ENCODE measurements at regions of chr2 and their contacts with region 1.

Region 1: DNA sequence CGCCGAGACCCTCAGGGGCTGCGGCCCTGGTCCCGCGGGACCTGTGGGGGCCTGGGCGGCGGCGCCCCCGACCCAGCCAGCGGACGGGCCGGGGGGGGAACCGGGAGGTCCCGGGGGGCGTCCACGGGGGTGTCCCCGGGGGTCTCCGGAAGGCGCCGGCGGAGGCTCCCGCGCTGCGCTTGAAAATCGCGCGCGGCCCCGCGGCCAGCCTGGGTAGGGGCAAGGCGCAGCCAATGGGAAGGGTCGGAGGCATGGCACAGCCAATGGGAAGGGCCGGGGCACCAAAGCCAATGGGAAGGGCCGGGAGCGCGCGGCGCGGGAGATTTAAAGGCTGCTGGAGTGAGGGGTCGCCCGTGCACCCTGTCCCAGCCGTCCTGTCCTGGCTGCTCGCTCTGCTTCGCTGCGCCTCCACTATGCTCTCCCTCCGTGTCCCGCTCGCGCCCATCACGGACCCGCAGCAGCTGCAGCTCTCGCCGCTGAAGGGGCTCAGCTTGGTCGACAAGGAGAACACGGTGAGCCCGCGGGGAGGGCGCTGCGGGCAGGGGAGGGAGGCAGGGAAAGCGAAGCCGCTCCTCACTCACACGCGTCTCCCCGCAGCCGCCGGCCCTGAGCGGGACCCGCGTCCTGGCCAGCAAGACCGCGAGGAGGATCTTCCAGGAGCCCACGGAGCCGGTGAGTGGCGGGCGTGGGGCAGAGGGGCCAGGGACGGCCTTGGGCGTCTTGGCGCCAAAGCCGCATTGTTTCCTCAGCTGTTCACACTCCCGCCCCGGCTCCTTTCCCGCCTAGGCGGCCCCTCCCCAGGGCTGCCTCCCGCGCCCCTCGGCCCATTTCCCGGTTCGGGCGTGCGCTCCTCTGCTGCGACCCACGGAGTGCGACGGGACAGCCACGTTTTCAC is at the start of gene RRM2:
- DNase-seq: peak; percentile 87
- ATAC-seq: peak; percentile 87
- H3K4me3 ChIP-seq: peak within 1 kb of the TSS; percentile 82
- H3K27ac ChIP-seq: peak within 1 kb of the TSS; percentile 81; the same call in 1 of the 2 replicates
- H3K4me1 ChIP-seq: peaks cover 11% of the 10 kb centered on the region
- H3K27me3 ChIP-seq: no peaks in the 10 kb centered on the region
- CTCF ChIP-seq: no peak
- POLR2A ChIP-seq: peak; percentile 91
- RAD21 ChIP-seq: no peak
- total RNA-seq, gene RRM2: 53.6 and 75.5 TPM in 2 replicates

Region 2: DNA sequence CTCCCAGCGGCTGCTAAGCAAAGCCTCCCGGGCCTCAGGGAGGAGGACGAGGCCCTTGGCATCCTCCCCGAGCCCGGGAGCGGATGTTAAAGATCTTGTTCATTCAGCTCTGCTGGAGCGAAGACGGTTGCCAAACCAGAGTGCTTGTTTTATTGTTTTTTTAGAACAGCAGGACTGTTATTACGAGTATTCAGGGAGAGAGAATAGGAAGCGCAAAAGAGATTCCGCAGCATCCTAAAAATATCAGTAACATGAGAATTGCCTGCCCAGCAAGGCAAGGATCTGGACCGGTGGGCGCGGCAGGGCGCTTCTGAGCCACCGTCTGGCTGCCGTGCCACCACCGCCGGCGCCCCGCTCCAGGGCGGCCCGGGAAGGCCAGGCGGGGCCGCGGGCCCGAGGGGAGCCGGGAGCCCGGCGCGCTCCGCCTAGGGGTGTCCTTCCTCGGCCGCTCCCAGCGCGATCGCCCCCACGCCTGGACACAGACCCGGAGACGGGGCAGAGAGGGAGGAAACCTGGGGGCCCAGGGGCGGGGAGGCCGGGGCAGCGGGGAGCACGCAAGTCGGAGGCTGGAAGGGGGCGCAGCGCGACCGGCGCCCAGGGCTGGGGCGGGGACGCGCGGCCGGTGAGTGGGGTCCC is 43.3 kb before region 1 on chr2:
- CTCF ChIA-PET with region 1: no interaction called
- POLR2A ChIA-PET with region 1: interaction called, 11 read pairs
- dilution Hi-C with region 1: no loop called
- in situ Hi-C with region 1: no loop called
- intact Hi-C with region 1: no loop called
- DNase-seq: peak; percentile 58
- ATAC-seq: peak; percentile 74
- H3K4me3 ChIP-seq: peak overlapping the region; percentile 52
- H3K27ac ChIP-seq: no peak overlapping the region
- H3K4me1 ChIP-seq: 0 out of 2 replicates have a peak, but pooled peaks cover 2% of the 10 kb centered on the region
- H3K27me3 ChIP-seq: peaks cover 64% of the 10 kb centered on the region
- CTCF ChIP-seq: no peak
- POLR2A ChIP-seq: no peak
- RAD21 ChIP-seq: no peak

Region 3: DNA sequence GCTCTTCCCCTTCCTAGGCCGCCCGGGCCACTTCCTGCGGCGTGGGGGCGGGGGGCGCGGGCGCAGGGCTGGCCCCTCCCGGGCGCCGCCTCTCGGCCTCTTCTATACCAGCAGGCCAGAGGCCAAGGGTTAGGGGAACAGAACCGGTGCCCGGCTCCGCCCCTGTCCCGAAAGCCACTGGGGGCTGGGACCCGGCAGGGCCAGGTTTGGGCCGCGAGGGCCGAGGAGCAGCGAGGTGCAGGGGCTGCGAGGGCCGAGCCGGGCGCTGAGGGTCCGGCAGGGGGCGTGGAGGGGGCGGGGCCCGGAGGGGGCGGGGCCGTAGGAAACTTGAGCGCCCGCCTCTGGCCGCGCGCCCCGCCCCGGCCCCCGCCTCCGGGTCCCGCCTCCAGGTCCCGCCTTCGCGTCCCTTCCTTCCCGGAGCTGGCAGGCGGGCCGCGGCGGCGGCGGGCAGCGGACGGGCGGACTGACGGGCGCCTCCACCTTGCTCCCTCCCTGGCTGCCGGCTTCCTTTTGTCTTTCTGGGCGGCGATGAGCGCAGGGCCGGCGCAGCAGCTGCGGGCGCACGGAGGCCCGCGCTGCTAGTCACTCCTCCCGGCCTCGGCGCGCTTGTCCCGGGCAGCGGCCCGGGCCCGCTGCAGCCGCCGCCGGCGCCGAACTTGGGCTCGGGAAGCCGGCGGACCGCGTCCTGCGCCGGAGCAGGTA is 180.0 kb after region 1 on chr2 and contains the start of gene HPCAL1:
- CTCF ChIA-PET with region 1: interaction called, 5 read pairs
- POLR2A ChIA-PET with region 1: no interaction called
- dilution Hi-C with region 1: no loop called
- in situ Hi-C with region 1: no loop called
- intact Hi-C with region 1: loop called (anchors 1 kb)
- DNase-seq: peak; percentile 70
- ATAC-seq: peak; percentile 88
- H3K4me3 ChIP-seq: peak within 1 kb of the TSS; percentile 72
- H3K27ac ChIP-seq: peak within 1 kb of the TSS; percentile 78
- H3K4me1 ChIP-seq: peaks cover 12% of the 10 kb centered on the region; the same call in 1 of the 2 replicates
- H3K27me3 ChIP-seq: no peaks in the 10 kb centered on the region
- CTCF ChIP-seq: peak; percentile 51
- POLR2A ChIP-seq: peak; percentile 56; the same call in 1 of the 2 replicates
- RAD21 ChIP-seq: no peak; the same call in 1 of the 2 replicates
- total RNA-seq, gene HPCAL1: 8.2 and 9.4 TPM in 2 replicates

Region 4: GRCh38 chr2:10408649-10409579 is 286.3 kb after region 1 on chr2:
- CTCF ChIA-PET with region 1: interaction called, 13 read pairs
- POLR2A ChIA-PET with region 1: no interaction called
- dilution Hi-C with region 1: no loop called
- in situ Hi-C with region 1: no loop called
- intact Hi-C with region 1: loop called (anchors 1 kb)
- DNase-seq: peak; percentile 64
- ATAC-seq: peak; percentile 73
- H3K4me3 ChIP-seq: no peak overlapping the region
- H3K27ac ChIP-seq: no peak overlapping the region
- H3K4me1 ChIP-seq: peaks cover 23% of the 10 kb centered on the region
- H3K27me3 ChIP-seq: no peaks in the 10 kb centered on the region
- CTCF ChIP-seq: peak; percentile 94
- POLR2A ChIP-seq: no peak
- RAD21 ChIP-seq: peak; percentile 95

Region 5: DNA sequence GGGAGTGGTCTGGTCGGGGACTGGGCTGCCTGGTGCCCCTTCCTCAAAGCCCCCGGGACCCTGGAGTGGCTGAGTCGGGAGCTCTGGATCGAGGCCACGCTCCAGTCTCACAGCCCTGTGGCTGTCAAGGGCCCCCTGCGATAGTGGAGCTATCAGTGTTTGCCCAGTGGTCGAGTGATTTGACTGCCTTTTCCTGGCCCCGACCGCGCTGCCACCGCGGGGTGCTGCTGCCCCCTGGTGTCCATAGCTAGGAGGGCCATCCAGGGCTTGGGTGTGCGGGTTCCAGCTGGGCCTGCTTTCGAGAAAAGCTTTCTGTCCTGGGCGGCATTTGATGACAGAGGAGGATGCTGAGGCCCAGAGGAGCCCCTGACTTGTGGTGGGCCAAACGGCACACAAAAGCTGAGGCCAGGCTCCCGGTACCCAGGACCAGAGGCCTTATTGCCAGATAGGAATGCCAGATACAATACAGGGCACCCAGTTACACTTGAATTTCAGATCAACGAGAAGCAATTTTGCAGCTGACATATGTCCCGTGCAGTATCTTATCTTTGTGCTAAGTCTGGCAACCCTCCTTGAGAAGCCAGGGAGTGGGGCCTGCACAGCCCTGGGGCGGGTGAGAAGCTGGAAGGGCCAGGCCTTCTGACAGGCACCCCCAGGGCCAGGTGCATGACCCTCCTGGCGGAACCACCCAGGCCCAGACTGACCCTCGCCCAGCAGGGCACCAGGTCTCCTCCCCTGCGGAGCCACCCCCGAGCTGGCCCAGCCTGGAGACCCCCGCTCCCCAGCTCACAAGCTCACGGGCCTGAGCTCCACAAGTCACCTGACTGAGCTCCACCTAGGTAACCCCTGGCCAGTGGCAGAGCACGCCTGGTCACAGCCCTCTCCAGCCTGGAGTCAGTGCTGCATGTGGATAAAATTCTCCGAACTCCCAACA is 312.5 kb after region 1 on chr2:
- CTCF ChIA-PET with region 1: interaction called, 25 read pairs
- POLR2A ChIA-PET with region 1: no interaction called
- dilution Hi-C with region 1: no loop called
- in situ Hi-C with region 1: no loop called
- intact Hi-C with region 1: loop called (anchors 1 kb)
- DNase-seq: peak; percentile 52
- ATAC-seq: peak; percentile 93
- H3K4me3 ChIP-seq: no peak overlapping the region
- H3K27ac ChIP-seq: no peak overlapping the region
- H3K4me1 ChIP-seq: no peaks in the 10 kb centered on the region
- H3K27me3 ChIP-seq: no peaks in the 10 kb centered on the region
- CTCF ChIP-seq: peak; percentile 98
- POLR2A ChIP-seq: peak; percentile 58; the same call in 1 of the 2 replicates
- RAD21 ChIP-seq: peak; percentile 100

Region 6: GRCh38 chr2:10659898-10660568 is 537.4 kb after region 1 on chr2:
- CTCF ChIA-PET with region 1: no interaction called
- POLR2A ChIA-PET with region 1: no interaction called
- dilution Hi-C with region 1: no loop called
- in situ Hi-C with region 1: no loop called
- intact Hi-C with region 1: loop called (anchors 2 kb)
- DNase-seq: peak; percentile 90
- ATAC-seq: peak; percentile 98
- H3K4me3 ChIP-seq: no peak overlapping the region
- H3K27ac ChIP-seq: no peak overlapping the region
- H3K4me1 ChIP-seq: peaks cover 6% of the 10 kb centered on the region
- H3K27me3 ChIP-seq: no peaks in the 10 kb centered on the region
- CTCF ChIP-seq: peak; percentile 88
- POLR2A ChIP-seq: 0 out of 2 replicates have a peak, but pooled peaks have one; percentile 27
- RAD21 ChIP-seq: peak; percentile 94

Region 7: GRCh38 chr2:11254100-11254536 is 1131.5 kb after region 1 on chr2:
- CTCF ChIA-PET with region 1: no interaction called
- POLR2A ChIA-PET with region 1: no interaction called
- dilution Hi-C with region 1: no loop called
- in situ Hi-C with region 1: no loop called
- intact Hi-C with region 1: no loop called
- DNase-seq: peak; percentile 28
- ATAC-seq: peak; percentile 63
- H3K4me3 ChIP-seq: no peak overlapping the region
- H3K27ac ChIP-seq: peak overlapping the region; percentile 2; the same call in 1 of the 2 replicates
- H3K4me1 ChIP-seq: peaks cover 7% of the 10 kb centered on the region
- H3K27me3 ChIP-seq: no peaks in the 10 kb centered on the region
- CTCF ChIP-seq: no peak
- POLR2A ChIP-seq: no peak
- RAD21 ChIP-seq: no peak

Measured in IMR-90 (cell line).